ENCODE measurements at regions of chr6 and their contacts with region 1.

Region 1: GRCh38 chr6:31862344-31863227 is at the start of gene NEU1:
- DNase-seq: peak; percentile 95
- ATAC-seq: peak; percentile 96
- H3K4me3 Mint-ChIP-seq: peak within 1 kb of the TSS; percentile 97
- H3K27ac Mint-ChIP-seq: peak within 1 kb of the TSS; percentile 86
- H3K4me1 Mint-ChIP-seq: peaks cover 13% of the 10 kb centered on the region
- H3K27me3 Mint-ChIP-seq: peaks cover 4% of the 10 kb centered on the region
- total RNA-seq, gene NEU1: 15.5 to 16.4 TPM

Region 2: GRCh38 chr6:31834434-31835198 is 28.0 kb before region 1 on chr6:
- POLR2A ChIA-PET with region 1: interaction called, 30 read pairs
- DNase-seq: peak; percentile 81
- ATAC-seq: peak; percentile 52
- H3K4me3 Mint-ChIP-seq: peak overlapping the region; percentile 84
- H3K27ac Mint-ChIP-seq: peak overlapping the region; percentile 93
- H3K4me1 Mint-ChIP-seq: peaks cover 34% of the 10 kb centered on the region
- H3K27me3 Mint-ChIP-seq: no peaks in the 10 kb centered on the region

Measured in activated naive CD8-positive, alpha-beta T cell treated with anti-CD3 and anti-CD28 coated beads, Interleukin-2, amount 10 ng/mL, durations not matched to agents 7 days and 5 days (primary cell).